ENCODE measurements at regions of chr3 and their contacts with region 1.

Region 1: GRCh38 chr3:194315088-194315964 is 35.8 kb downstream of the CPN2 start:
- DNase-seq: no peak
- H3K4me3 ChIP-seq: peak overlapping the region; percentile 61
- CTCF ChIP-seq: peak; percentile 98

Region 2: GRCh38 chr3:193655831-193656433 is 659.4 kb before region 1 on chr3:
- CTCF ChIA-PET with region 1: interaction called, 86 read pairs
- POLR2A ChIA-PET with region 1: no interaction called
- DNase-seq: no peak
- H3K4me3 ChIP-seq: no peak overlapping the region
- CTCF ChIP-seq: no peak

Region 3: DNA sequence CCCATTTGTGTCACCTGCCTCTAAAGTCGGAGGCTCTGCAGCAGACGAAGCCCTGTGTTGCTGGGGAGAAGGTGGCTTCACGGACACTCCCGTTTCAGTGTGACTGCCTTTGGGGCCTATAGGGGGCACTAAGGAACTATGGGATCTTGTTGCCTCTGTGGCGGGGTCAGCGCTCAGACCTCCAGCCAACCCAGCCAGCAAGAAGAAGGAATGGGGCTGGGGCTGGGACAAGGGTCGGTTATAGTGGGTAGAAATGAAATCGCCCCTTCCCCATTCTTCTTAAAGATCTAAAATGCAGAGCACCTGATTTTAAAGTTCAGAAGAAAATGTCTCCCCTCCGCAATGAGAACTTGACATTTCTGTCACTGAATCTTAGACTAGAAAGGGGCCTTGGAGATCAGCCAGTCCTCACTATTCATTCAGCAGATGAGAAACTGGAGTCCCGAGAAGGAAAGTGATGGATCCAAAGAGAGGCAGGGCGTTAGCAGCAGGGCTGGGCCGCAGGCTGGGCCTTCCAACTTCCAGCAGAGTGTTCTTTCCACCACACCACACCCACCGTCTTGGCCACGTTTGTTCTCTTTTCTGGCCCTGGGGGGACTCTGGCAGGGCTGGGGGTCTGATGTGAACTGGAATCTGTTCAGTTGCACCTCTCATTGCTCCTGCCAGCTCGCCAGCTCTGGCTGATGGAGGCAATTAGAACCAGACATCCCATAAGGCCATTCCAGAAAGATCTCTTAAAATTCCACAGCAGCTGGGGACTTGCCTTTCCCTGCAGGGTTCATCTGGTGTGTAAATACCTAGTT is 526.9 kb before region 1 on chr3:
- CTCF ChIA-PET with region 1: interaction called, 416 read pairs
- POLR2A ChIA-PET with region 1: no interaction called
- DNase-seq: no peak
- H3K4me3 ChIP-seq: no peak overlapping the region
- CTCF ChIP-seq: peak; percentile 74

Region 4: GRCh38 chr3:194134757-194135528 is 180.4 kb before region 1 on chr3:
- CTCF ChIA-PET with region 1: interaction called, 32 read pairs
- POLR2A ChIA-PET with region 1: no interaction called
- DNase-seq: peak; percentile 85
- H3K4me3 ChIP-seq: peak overlapping the region; percentile 62
- CTCF ChIP-seq: no peak

Region 5: GRCh38 chr3:194224471-194225415 is 90.6 kb before region 1 on chr3:
- CTCF ChIA-PET with region 1: no interaction called
- POLR2A ChIA-PET with region 1: no interaction called
- DNase-seq: no peak
- H3K4me3 ChIP-seq: no peak overlapping the region
- CTCF ChIP-seq: no peak

Region 6: GRCh38 chr3:194285024-194285849 is 30.1 kb before region 1 on chr3:
- CTCF ChIA-PET with region 1: interaction called, 11 read pairs
- POLR2A ChIA-PET with region 1: no interaction called
- DNase-seq: no peak
- H3K4me3 ChIP-seq: no peak overlapping the region
- CTCF ChIP-seq: no peak